ENCODE measurements at regions of chr12 and their contacts with region 1.

Region 1: DNA sequence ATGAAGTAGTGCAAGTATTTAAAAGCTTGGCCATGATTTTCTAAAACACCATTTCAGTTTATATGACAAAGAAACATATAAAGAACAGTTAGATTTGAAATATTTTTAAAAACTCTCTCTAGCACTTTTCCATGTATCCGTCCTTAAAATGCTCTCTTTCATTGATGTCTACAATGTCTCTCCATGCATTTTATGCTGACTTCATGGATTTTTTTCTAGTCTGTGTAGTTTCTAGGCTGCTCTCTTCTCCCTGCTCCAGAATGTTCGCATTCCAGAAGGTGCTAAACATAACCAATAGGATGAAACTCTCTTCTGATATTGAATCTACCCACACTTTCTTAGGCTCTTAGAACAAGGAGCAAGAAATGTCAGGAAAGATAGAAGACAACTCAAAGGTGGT is 124.8 kb downstream of the PLCZ1 start:
- DNase-seq: no peak
- H3K4me3 ChIP-seq: no peak overlapping the region
- H3K27ac ChIP-seq: no peak overlapping the region
- H3K4me1 ChIP-seq: no peaks in the 10 kb centered on the region
- H3K27me3 ChIP-seq: no peaks in the 10 kb centered on the region
- CTCF ChIP-seq: no peak
- POLR2A ChIP-seq: no peak

Region 2: DNA sequence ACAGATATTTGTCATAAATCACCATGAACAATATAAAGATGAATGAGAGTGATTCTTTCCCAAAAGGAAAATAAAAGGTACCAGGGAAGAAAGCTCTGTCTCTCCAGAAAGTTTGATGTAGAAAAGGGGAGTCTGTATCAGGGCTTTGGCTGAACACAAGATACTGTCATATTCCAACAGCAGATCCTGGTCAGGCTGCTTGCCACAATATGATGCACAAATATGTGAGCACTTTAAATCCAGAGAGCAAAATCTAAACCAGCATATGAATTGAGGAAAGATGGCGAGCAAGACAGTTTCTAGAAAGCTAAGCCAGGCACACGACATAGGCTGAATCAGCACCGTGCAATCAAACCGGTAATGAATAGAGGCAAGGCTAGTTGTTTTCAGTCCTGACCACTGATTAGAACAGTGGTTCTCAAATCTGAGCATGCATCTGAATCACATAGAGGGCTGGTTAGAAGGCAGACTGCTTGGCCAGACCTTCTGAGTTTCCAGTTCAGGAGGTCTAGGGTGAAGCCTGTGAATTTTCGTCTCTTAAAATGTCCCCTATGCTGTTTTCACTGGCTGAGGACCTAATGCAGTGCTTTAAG is 64.1 kb after region 1 on chr12:
- intact Hi-C with region 1: loop called (anchors 5 kb)
- DNase-seq: no peak
- H3K4me3 ChIP-seq: no peak overlapping the region
- H3K27ac ChIP-seq: no peak overlapping the region
- H3K4me1 ChIP-seq: no peaks in the 10 kb centered on the region
- H3K27me3 ChIP-seq: no peaks in the 10 kb centered on the region
- CTCF ChIP-seq: no peak
- POLR2A ChIP-seq: no peak